ENCODE measurements at regions of chr7 and their contacts with region 1.

Region 1: DNA sequence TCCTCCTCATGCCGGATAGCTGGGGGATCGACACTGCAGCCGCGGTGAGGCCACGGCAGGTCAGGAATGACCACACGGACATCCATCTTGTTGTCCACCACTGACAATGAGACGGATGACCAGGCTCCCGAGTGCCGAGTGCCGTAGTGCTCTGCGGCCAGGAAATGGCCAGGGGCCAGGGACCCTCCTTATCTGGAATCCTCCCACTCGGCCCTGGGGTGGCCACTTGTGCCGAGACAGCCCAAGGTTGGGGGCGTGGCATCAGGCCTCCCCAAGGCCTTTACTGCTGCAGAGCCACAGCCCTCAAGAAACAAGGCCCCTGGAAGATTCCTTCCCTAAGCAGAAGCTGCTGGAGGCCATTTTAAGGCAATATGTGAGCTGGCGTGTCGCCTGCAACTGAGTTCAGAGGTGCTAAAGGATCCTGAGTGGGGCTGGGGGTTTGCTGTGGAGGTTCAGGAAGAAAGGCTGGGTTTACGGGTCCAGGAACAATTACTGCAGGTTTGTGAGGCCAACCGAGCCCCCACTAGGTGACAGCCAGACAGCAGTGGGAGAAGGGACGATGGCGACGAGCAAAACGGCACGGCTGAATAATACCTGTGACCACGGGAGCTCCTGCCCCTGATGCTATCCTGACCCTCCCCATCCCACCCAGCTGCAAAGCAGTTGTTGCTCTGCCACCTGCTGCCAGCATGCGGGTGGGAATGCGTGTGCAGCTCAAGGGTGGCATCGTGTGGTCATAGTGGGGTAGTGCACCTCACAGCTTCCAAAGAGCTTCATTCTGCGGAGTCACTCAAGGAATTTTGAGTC is 31.6 kb upstream of the LEP start:
- DNase-seq: peak; percentile 76
- ATAC-seq: peak; percentile 55
- H3K4me3 Mint-ChIP-seq: no peak overlapping the region
- H3K27ac Mint-ChIP-seq: no peak overlapping the region
- H3K4me1 Mint-ChIP-seq: peaks cover 25% of the 10 kb centered on the region
- H3K27me3 Mint-ChIP-seq: peaks cover 23% of the 10 kb centered on the region
- CTCF ChIP-seq: peak; percentile 95

Region 2: GRCh38 chr7:127792528-127793342 is 416.7 kb before region 1 on chr7:
- CTCF ChIA-PET with region 1: interaction called, 11 read pairs
- POLR2A ChIA-PET with region 1: no interaction called
- DNase-seq: peak; percentile 84
- ATAC-seq: peak; percentile 93
- H3K4me3 Mint-ChIP-seq: no peak overlapping the region
- H3K27ac Mint-ChIP-seq: peak overlapping the region; percentile 13
- H3K4me1 Mint-ChIP-seq: peaks cover 47% of the 10 kb centered on the region
- H3K27me3 Mint-ChIP-seq: no peaks in the 10 kb centered on the region
- CTCF ChIP-seq: peak; percentile 78

Region 3: DNA sequence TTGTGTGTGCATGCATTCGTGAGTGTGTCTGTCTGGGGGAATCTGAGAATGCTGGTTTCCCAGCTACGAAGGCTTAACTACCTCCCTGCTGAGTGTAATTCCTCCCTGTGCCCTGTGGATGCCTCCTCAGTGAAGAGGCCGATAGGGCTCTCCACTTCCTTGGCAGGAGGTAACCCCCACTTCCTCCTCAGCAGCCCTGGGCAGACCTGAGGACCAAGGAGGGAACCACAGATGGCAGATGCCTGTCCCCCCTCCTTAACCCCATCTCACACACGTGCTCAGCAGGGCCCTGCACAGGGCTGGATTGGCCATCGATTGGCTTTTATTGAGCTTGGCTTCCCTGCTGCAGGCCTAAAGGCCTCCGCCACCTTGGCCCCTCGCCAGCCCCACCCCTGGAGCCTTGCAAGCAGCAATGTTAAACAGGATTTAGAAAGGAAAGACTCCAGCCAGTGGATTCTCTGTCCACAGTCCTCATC is 132.6 kb before region 1 on chr7:
- CTCF ChIA-PET with region 1: interaction called, 19 read pairs
- POLR2A ChIA-PET with region 1: no interaction called
- DNase-seq: no peak
- ATAC-seq: no peak
- H3K4me3 Mint-ChIP-seq: no peak overlapping the region
- H3K27ac Mint-ChIP-seq: no peak overlapping the region
- H3K4me1 Mint-ChIP-seq: peaks cover 10% of the 10 kb centered on the region; the same call in 1 of the 2 replicates
- H3K27me3 Mint-ChIP-seq: no peaks in the 10 kb centered on the region
- CTCF ChIP-seq: no peak

Region 4: GRCh38 chr7:128129224-128129864 is 80.1 kb before region 1 on chr7:
- CTCF ChIA-PET with region 1: interaction called, 198 read pairs
- POLR2A ChIA-PET with region 1: no interaction called
- DNase-seq: no peak
- ATAC-seq: no peak
- H3K4me3 Mint-ChIP-seq: no peak overlapping the region
- H3K27ac Mint-ChIP-seq: no peak overlapping the region
- H3K4me1 Mint-ChIP-seq: peaks cover under 1% of the 10 kb centered on the region; the same call in 1 of the 2 replicates
- H3K27me3 Mint-ChIP-seq: peaks cover 19% of the 10 kb centered on the region
- CTCF ChIP-seq: no peak

Region 5: DNA sequence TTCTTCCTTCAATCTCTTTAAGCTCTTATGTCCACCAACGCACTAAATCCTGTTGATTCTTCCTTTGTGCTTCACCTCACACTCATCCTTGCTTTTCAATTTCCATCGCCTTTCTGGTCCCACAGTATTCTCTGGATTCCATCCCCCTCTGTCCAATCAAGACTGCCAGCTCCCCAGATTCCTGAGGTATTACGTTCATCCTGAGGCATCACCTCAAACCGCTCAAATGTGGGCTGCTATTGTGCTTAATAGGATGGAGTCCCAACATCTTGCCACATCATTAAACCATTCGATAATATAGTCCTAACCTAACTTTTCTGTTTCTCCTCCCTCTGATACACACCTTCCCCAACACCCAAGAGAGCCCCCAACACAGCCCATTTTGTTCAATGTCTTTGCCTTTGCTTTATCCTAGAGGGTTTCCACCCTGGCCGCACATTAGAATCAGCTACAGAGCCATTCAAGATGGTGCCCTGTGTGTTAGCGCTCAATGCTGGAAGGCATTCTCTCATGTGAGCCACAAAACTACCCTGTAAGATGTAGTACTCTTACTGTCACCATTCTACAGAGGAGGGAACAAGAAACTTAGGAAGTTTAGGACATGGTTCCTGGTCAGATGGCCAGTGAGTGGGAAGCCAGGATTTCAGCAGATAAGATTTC is 47.8 kb before region 1 on chr7:
- CTCF ChIA-PET with region 1: interaction called, 112 read pairs
- POLR2A ChIA-PET with region 1: no interaction called
- DNase-seq: no peak
- ATAC-seq: no peak
- H3K4me3 Mint-ChIP-seq: no peak overlapping the region
- H3K27ac Mint-ChIP-seq: no peak overlapping the region
- H3K4me1 Mint-ChIP-seq: peaks cover 16% of the 10 kb centered on the region
- H3K27me3 Mint-ChIP-seq: peaks cover 81% of the 10 kb centered on the region
- CTCF ChIP-seq: no peak

Region 6: GRCh38 chr7:128266883-128267607 is 57.6 kb after region 1 on chr7:
- CTCF ChIA-PET with region 1: interaction called, 13 read pairs
- POLR2A ChIA-PET with region 1: no interaction called
- DNase-seq: peak; percentile 59
- ATAC-seq: peak; percentile 76
- H3K4me3 Mint-ChIP-seq: peak overlapping the region; percentile 47
- H3K27ac Mint-ChIP-seq: no peak overlapping the region
- H3K4me1 Mint-ChIP-seq: peaks cover 40% of the 10 kb centered on the region
- H3K27me3 Mint-ChIP-seq: peaks cover 18% of the 10 kb centered on the region
- CTCF ChIP-seq: no peak

Region 7: DNA sequence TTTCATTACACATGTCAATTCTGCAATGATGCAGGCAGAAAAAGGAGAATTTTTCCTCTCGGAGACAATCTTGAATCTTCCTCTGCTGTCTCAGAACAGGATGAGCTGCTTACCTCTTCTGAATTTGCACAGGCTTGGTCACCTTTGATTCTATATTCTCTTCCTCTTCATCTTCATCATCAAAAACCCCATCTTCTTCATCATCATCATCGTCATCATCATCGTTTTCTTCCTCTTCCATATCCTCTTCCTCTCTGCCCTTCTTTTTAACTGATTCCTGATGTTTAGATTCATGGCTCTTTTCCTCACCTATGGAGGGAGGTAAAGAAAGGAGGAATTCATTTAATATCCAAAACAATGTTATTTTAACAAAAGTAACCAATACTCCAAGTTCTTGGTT is 126.3 kb after region 1 on chr7:
- CTCF ChIA-PET with region 1: no interaction called
- POLR2A ChIA-PET with region 1: no interaction called
- DNase-seq: no peak
- ATAC-seq: no peak
- H3K4me3 Mint-ChIP-seq: no peak overlapping the region
- H3K27ac Mint-ChIP-seq: no peak overlapping the region
- H3K4me1 Mint-ChIP-seq: no peaks in the 10 kb centered on the region
- H3K27me3 Mint-ChIP-seq: no peaks in the 10 kb centered on the region
- CTCF ChIP-seq: no peak